ENCODE measurements at regions of chr6 and their contacts with region 1.

Region 1: GRCh38 chr6:133568970-133569889 is 319.7 kb upstream of the TCF21 start:
- DNase-seq: no peak
- H3K4me3 Mint-ChIP-seq: peak overlapping the region; percentile 71
- H3K27ac Mint-ChIP-seq: no peak overlapping the region
- H3K4me1 Mint-ChIP-seq: peaks cover 7% of the 10 kb centered on the region
- H3K27me3 Mint-ChIP-seq: peaks cover 26% of the 10 kb centered on the region

Region 2: GRCh38 chr6:133916650-133917151 is 347.5 kb after region 1 on chr6:
- intact Hi-C with region 1: loop called (anchors 2 kb)
- DNase-seq: peak; percentile 49
- H3K4me3 Mint-ChIP-seq: no peak overlapping the region
- H3K27ac Mint-ChIP-seq: no peak overlapping the region
- H3K4me1 Mint-ChIP-seq: peaks cover 3% of the 10 kb centered on the region
- H3K27me3 Mint-ChIP-seq: peaks cover 32% of the 10 kb centered on the region

Region 3: DNA sequence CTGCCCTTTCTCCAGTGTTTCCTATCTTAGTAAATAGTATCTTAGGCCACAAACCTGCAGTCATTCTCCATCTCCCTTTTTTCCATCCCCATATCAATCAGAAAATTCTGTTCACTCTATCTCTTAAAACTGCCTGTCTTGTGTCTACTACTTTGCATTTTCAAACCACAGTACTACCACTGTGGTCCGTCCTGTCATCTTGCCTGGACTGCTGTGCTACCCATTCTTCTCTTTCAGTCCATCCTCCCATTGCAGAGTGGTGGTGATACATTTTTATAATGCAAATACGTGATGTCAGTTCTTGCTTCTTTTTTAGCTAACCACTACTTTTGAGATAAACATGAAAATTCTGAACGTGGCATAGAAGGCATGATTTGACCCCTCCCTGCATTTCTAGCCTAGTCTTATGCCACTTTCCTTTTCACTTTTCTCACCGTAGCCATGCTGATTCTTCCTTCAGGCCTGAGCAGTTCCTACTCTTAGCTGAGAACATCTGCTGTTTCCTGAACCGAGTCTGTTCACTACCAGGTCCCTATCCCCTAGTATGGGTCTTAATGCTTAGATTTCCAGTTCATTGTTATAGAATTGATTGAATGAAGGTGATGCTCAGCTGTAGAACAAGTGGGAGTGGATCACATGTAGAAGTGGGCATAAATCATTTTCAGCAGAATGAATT is 397.6 kb after region 1 on chr6:
- intact Hi-C with region 1: no loop called
- DNase-seq: no peak
- H3K4me3 Mint-ChIP-seq: no peak overlapping the region
- H3K27ac Mint-ChIP-seq: no peak overlapping the region
- H3K4me1 Mint-ChIP-seq: peaks cover 23% of the 10 kb centered on the region
- H3K27me3 Mint-ChIP-seq: no peaks in the 10 kb centered on the region

Region 4: GRCh38 chr6:134097114-134097707 is 528.0 kb after region 1 on chr6:
- intact Hi-C with region 1: loop called (anchors 10 kb)
- DNase-seq: peak; percentile 25
- H3K4me3 Mint-ChIP-seq: no peak overlapping the region
- H3K27ac Mint-ChIP-seq: no peak overlapping the region
- H3K4me1 Mint-ChIP-seq: peaks cover 6% of the 10 kb centered on the region
- H3K27me3 Mint-ChIP-seq: peaks cover 27% of the 10 kb centered on the region

Measured in activated T-helper 2 cell treated with anti-CD3 and anti-CD28 coated beads, Interferon-gamma antibody, Interleukin-2, Interleukin-4, amounts not matched to agents 10 μg/mL and 5 μg/mL and 100 μg/mL, durations not matched to agents 14 hours and 24 hours and 36 hours (primary cell).